ENCODE measurements at regions of chr11 and their contacts with region 1.

Region 1: GRCh38 chr11:134062265-134063123 is 6.4 kb upstream of the JAM3 start:
- DNase-seq: no peak
- ATAC-seq: no peak
- H3K4me3 ChIP-seq: no peak overlapping the region
- H3K27ac ChIP-seq: no peak overlapping the region
- H3K4me1 ChIP-seq: no peaks in the 10 kb centered on the region
- H3K27me3 ChIP-seq: peaks cover 0 to 6% (median 0%) of the 10 kb centered on the region in 7 donors
- CTCF ChIP-seq: no peak

Region 2: GRCh38 chr11:133712051-133712560 is 350.4 kb before region 1 on chr11:
- intact Hi-C with region 1: no loop called
- DNase-seq: peak in 1 of 2 donors; percentile 12
- ATAC-seq: peak in 6 of 8 donors; percentile 44 to 61 (median 52)
- H3K4me3 ChIP-seq: no peak overlapping the region
- H3K27ac ChIP-seq: peak overlapping the region in 1 of 10 donors; percentile 21
- H3K4me1 ChIP-seq: peaks cover 0 to 28% (median 8%) of the 10 kb centered on the region in 9 donors
- H3K27me3 ChIP-seq: peaks cover 0 to 8% (median 1%) of the 10 kb centered on the region in 7 donors
- CTCF ChIP-seq: no peak

Region 3: DNA sequence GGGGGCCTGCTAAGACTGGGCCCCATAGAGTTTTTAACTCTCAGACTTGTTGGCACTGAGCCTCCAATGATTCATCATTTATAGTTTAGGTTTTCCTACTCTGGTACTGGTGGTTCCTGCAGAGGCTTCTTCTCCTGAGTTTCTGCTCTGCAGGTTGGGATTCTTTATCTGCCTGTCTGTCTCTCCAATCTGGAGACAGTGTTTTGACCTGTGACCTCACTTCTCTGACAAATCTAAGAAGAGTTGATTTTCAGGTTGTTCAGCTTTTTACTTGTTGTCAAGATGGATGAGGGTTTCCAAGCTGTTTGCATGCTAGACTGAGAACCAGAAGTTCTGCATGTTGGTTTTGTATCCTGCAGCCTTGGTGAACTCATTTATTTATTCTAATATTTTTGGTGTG is 70.3 kb after region 1 on chr11:
- intact Hi-C with region 1: loop called in 3 of 10 experiments (anchors 5 kb)
- DNase-seq: no peak
- ATAC-seq: no peak
- H3K4me3 ChIP-seq: no peak overlapping the region
- H3K27ac ChIP-seq: no peak overlapping the region
- H3K4me1 ChIP-seq: no peaks in the 10 kb centered on the region
- H3K27me3 ChIP-seq: no peaks in the 10 kb centered on the region
- CTCF ChIP-seq: no peak